Natural killer cell (primary cell): ENCODE measurements at regions of chr7 and their contacts with region 1.

Region 1: DNA sequence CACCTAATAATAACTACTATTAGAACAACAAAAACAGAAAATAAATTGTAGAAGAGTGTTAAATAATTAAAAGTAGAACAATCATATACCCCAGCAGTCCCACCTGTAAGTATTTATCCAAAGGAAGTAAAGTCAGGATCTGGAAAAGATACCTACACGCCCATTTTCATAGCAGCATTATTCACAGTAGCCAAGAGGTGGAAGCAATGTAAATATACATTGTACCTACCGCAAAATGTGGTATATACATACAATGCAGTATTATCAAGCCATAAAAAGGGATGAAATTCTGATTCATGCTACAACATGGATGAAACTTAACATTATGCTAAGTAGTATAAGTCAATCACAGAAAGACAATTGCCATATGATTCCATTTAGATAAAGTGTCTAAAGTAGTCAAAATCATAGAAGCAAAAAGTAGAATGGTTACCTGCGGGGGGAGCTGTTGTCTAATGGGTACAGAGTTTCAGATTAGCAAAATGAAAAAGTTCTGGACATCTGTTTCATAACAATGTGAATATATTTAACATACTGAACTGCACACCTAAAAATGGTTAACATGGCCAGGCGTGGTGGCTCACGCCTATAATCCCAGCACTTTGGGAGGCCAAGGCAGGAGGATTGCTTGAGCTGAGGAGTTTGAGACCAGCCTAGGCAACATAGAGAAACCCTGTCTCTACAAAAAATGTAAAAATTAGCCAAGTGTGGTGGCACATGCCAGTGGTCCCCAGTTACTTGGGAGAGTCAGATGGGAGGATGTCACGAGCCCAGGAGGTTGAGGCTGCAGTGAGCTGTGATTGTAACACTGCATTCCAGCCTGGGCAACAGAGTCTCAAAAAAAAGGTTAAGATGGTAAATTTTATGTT is 6.0 kb upstream of the TMED4 start:
- DNase-seq: peak; percentile 43 to 81
- ATAC-seq: peak; percentile 76 to 92 (median 79)
- H3K4me3 ChIP-seq: no peak overlapping the region
- H3K4me3 Mint-ChIP-seq: no peak overlapping the region
- H3K27ac ChIP-seq: no peak overlapping the region
- H3K27ac Mint-ChIP-seq: peak overlapping the region in 1 of 2 donors; percentile 12
- H3K4me1 ChIP-seq: peaks cover 5% of the 10 kb centered on the region
- H3K4me1 Mint-ChIP-seq: peaks cover 4 to 8% of the 10 kb centered on the region in 2 donors
- H3K27me3 ChIP-seq: no peaks in the 10 kb centered on the region
- H3K27me3 Mint-ChIP-seq: peaks cover 0 to 2% of the 10 kb centered on the region in 2 donors
- CTCF ChIP-seq: peak; percentile 74

Region 2: GRCh38 chr7:44449584-44449928 is 138.5 kb before region 1 on chr7:
- intact Hi-C with region 1: no loop called
- DNase-seq: no peak
- ATAC-seq: no peak
- H3K4me3 ChIP-seq: no peak overlapping the region
- H3K4me3 Mint-ChIP-seq: no peak overlapping the region
- H3K27ac ChIP-seq: no peak overlapping the region
- H3K27ac Mint-ChIP-seq: peak overlapping the region in 1 of 2 donors; percentile 18
- H3K4me1 ChIP-seq: peaks cover 3% of the 10 kb centered on the region
- H3K4me1 Mint-ChIP-seq: peaks cover 40% of the 10 kb centered on the region in 2 donors
- H3K27me3 ChIP-seq: no peaks in the 10 kb centered on the region
- H3K27me3 Mint-ChIP-seq: no peaks in the 10 kb centered on the region
- CTCF ChIP-seq: no peak

Region 3: GRCh38 chr7:44921607-44922359 is 333.7 kb after region 1 on chr7:
- intact Hi-C with region 1: loop called (anchors 1 kb)
- DNase-seq: peak; percentile 94
- ATAC-seq: peak; percentile 94 to 99 (median 99)
- H3K4me3 ChIP-seq: no peak overlapping the region
- H3K4me3 Mint-ChIP-seq: no peak overlapping the region
- H3K27ac ChIP-seq: no peak overlapping the region
- H3K27ac Mint-ChIP-seq: peak overlapping the region in 1 of 2 donors; percentile 74
- H3K4me1 ChIP-seq: peaks cover 5% of the 10 kb centered on the region
- H3K4me1 Mint-ChIP-seq: peaks cover 0 to 4% of the 10 kb centered on the region in 2 donors
- H3K27me3 ChIP-seq: no peaks in the 10 kb centered on the region
- H3K27me3 Mint-ChIP-seq: peaks cover 0 to 7% of the 10 kb centered on the region in 2 donors
- CTCF ChIP-seq: peak; percentile 87

Region 4: GRCh38 chr7:45259966-45260646 is 672.0 kb after region 1 on chr7:
- intact Hi-C with region 1: loop called (anchors 5 kb)
- DNase-seq: peak; percentile 64 to 76
- ATAC-seq: peak; percentile 76 to 89 (median 76)
- H3K4me3 ChIP-seq: no peak overlapping the region
- H3K4me3 Mint-ChIP-seq: no peak overlapping the region
- H3K27ac ChIP-seq: no peak overlapping the region
- H3K27ac Mint-ChIP-seq: no peak overlapping the region
- H3K4me1 ChIP-seq: peaks cover 6% of the 10 kb centered on the region
- H3K4me1 Mint-ChIP-seq: no peaks in the 10 kb centered on the region
- H3K27me3 ChIP-seq: peaks cover 2% of the 10 kb centered on the region
- H3K27me3 Mint-ChIP-seq: peaks cover 16 to 36% of the 10 kb centered on the region in 2 donors
- CTCF ChIP-seq: peak; percentile 99